ENCODE measurements at regions of chr5 and their contacts with region 1.

Region 1: GRCh38 chr5:78294248-78295034 is at the start of gene AP3B1:
- DNase-seq: peak; percentile 98
- H3K4me3 Mint-ChIP-seq: peak within 1 kb of the TSS; percentile 93
- H3K27ac Mint-ChIP-seq: peak within 1 kb of the TSS; percentile 98
- H3K4me1 Mint-ChIP-seq: peaks cover 37% of the 10 kb centered on the region
- H3K27me3 Mint-ChIP-seq: peaks cover 13% of the 10 kb centered on the region

Region 2: DNA sequence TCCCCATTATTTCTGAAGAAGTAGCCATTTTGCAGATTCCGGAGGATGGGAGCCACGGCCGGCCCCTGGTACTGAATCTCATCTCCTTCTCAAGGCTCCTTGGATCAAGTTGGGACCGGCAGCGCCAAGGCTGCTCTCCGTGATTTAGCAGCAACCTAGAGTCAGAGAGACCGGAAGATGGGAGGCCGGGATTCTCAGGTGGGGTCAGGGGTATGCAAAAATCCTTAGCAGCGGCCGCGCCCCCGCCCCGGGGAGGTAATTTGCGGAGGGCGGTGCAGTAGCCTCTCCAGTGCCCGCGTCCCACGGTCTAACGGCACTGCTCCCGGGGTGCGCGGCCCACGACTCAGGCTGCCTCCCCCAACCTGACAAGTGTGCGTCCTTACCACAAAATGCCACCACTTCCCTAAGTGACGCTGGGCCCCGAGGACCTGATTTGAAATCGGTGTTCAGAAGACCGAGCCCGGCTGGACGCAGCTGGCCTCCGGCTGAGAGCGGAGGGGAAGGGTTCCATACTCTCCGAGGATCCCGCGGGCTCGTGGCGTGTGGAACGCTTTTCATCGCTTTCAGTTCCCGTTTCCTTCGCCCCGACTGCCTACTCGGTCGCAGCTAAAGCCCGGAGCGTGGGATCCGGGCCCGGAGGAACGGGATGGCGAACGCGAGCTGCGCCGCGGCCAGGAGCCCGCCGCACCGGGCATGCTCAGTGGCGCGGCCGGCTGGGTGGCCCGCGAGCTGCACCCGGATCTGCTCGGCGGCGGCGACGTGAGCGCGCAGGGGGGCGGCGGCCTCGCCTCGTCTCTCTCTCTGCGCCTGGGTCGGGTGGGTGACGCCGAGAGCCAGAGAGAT is 65.6 kb after region 1 on chr5 and contains the start of gene SCAMP1:
- CTCF ChIA-PET with region 1: interaction called, 16 read pairs
- DNase-seq: peak; percentile 92
- H3K4me3 Mint-ChIP-seq: peak within 1 kb of the TSS; percentile 95
- H3K27ac Mint-ChIP-seq: peak within 1 kb of the TSS; percentile 95
- H3K4me1 Mint-ChIP-seq: peaks cover 30% of the 10 kb centered on the region
- H3K27me3 Mint-ChIP-seq: no peaks in the 10 kb centered on the region